Heart left ventricle (tissue), 16 donors: ENCODE measurements at regions of chr19 and their contacts with region 1.

Region 1: GRCh38 chr19:58513694-58514563 is 2.1 kb upstream of the SLC27A5 start:
- DNase-seq: peak; percentile 81 to 95 (median 90)
- ATAC-seq: peak; percentile 48 to 90 (median 88)
- H3K4me3 ChIP-seq: peak overlapping the region in 11 of 12 donors; percentile 14 to 55 (median 50)
- H3K27ac ChIP-seq: peak overlapping the region in 9 of 12 donors; percentile 14 to 84 (median 52)
- H3K4me1 ChIP-seq: peaks cover 7 to 55% (median 31%) of the 10 kb centered on the region in 12 donors
- H3K27me3 ChIP-seq: no peaks in the 10 kb centered on the region
- CTCF ChIP-seq: peak; percentile 82 to 97 (median 88)
- POLR2A ChIP-seq: no peak

Region 2: DNA sequence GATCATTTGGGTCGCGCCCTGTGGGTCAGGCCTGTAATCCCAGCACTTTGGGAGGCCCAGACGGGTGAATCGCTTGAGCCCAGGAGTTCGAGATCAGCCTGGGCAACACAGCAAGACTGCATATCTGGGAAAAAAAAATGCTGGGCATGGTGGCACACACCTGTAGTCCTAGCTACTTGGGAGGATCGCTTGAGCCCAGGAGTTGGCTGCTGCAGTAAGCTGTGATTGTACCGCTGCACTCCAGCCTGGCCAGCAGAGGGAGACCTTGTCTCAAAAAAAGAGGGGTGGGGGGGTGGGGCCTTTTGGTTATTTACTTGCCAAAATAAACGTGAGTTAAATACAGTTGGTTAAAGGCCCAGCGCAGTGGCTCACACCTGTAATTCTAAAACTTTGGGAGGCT is 295.0 kb before region 1 on chr19:
- intact Hi-C with region 1: loop called in 1 of 10 experiments (anchors 5 kb)
- DNase-seq: no peak
- ATAC-seq: no peak
- H3K4me3 ChIP-seq: no peak overlapping the region
- H3K27ac ChIP-seq: no peak overlapping the region
- H3K4me1 ChIP-seq: no peaks in the 10 kb centered on the region
- H3K27me3 ChIP-seq: no peaks in the 10 kb centered on the region
- CTCF ChIP-seq: peak in 6 of 12 donors; percentile 16 to 20 (median 17)
- POLR2A ChIP-seq: no peak